Activated T-helper 2 cell treated with anti-CD3 and anti-CD28 coated beads, Interferon-gamma antibody, Interleukin-2, Interleukin-4, amounts not matched to agents 10 μg/mL and 5 μg/mL and 100 μg/mL, durations not matched to agents 14 hours and 24 hours and 36 hours (primary cell): ENCODE measurements at regions of chr12 and their contacts with region 1.

Region 1: DNA sequence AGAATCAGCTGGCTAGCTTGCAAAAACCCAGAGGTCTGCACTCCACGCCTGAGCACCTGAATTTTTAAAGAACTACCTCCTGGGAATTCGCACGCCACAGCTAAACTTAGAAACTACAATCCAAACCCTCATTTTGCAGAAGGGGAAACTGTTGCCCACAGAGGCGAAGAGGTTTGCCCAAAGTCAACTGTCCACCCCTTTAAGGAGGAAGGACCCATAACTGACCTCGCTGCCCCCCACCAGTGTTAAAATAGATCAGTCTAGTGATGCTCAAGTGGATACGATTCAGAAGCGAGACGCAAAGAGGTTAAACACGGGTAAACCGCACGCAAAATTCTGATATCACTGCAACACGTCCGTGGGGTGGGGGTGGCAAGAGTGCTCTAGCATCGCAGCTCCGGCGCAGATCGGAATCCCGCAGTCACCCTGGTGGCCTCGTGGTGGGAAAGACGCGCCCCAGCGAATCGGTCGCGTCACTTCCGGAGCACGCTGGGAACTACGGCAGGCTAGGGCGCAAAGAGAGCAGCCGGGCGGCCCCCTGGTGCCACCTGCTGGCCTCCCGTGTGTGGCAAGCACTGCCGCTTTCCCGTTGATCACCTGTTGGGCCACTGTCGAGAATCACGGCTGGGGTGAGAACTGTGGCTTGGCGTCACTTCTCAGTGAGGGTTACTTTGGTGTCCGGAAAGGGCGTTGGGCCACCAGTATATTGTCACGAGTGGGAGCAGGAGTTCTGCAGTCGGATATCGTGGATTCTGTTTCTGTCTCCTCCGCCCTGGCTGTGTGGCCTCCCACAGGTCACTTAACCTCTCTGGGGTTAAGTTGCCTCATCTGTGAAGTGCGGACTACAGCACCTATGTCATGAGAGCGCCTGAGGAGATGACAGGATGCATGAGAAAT is at the start of gene ALKBH2:
- DNase-seq: peak; percentile 90
- H3K4me3 Mint-ChIP-seq: peak within 1 kb of the TSS; percentile 77
- H3K27ac Mint-ChIP-seq: peak within 1 kb of the TSS; percentile 71
- H3K4me1 Mint-ChIP-seq: peaks cover 33% of the 10 kb centered on the region
- H3K27me3 Mint-ChIP-seq: no peaks in the 10 kb centered on the region
- total RNA-seq, gene ALKBH2: 33.4 and 34.9 TPM in 2 replicates

Region 2: DNA sequence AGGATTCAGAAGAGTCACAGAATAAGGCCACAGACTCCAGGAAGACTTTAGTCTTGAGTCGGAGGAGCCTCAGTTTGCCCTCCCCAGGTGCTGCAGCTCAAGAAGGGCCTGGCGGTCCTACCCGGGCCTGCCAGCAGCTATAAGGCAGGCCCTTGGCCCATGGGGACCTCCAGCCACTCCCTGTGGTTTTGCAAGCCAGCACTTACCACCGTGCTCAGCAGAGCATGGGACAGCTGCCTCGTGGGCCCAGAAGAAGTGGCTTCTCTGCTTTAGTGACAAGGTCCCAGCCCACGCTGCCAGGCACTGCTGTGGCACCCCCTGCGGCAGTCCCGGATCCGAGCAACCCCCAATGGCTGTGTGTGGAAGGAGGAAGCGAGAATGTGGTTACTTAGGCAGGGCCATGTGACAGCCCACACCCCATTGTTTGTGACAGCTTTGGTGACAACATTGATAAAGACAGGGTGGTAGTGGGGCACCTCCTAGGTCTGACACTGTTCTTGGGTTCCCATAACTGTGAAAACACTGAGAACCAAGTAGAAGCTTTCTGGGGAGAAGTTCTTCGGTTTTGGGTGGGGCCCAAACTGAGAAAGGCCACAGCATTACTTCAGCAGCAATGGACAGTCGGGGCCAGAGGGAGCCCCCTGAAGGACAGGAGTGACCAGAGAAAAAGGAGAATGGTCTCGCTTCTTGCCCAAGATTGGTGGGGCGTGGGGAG is 459.6 kb before region 1 on chr12 and contains the start of gene SELPLG:
- intact Hi-C with region 1: loop called (anchors 2 kb)
- DNase-seq: peak; percentile 83
- H3K4me3 Mint-ChIP-seq: peak within 1 kb of the TSS; percentile 98
- H3K27ac Mint-ChIP-seq: peak within 1 kb of the TSS; percentile 99
- H3K4me1 Mint-ChIP-seq: peaks cover 65% of the 10 kb centered on the region
- H3K27me3 Mint-ChIP-seq: no peaks in the 10 kb centered on the region
- total RNA-seq, gene SELPLG: 52.1 and 55.6 TPM in 2 replicates

Region 3: DNA sequence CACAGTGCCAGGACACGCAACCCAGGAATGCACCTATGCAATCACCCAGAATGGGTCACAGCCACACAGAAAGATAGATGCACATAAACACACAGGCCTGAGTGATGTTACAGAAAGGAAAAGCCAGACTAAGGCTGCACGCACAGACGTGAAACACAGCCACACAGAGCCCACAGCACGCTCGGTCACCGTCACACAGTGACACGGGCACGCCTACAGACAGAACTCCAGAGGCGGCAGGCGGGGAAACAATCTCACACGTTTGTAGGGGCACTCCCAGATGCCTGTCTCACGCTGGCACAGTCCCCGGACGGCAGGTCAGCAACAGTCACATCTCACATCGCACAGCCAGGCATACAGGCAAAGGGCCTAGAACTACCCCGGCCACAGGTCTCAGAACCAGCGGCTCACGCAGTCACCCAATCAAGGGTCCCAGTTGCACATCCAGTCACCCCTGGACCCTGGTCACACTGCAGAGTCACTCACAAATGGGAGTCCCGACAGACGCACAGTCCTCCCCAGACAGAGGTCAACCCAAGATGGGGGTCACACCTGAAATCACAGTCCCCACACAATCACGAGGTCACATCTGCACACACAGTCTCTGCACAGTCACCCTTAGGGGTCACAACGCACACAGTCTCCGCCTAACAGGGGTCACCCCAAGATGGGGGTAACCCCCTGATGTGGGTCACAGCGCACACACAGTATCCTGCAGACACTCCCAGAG is 236.7 kb before region 1 on chr12:
- intact Hi-C with region 1: loop called (anchors 10 kb)
- DNase-seq: peak; percentile 40
- H3K4me3 Mint-ChIP-seq: peak overlapping the region; percentile 83
- H3K27ac Mint-ChIP-seq: peak overlapping the region; percentile 84
- H3K4me1 Mint-ChIP-seq: peaks cover 56% of the 10 kb centered on the region
- H3K27me3 Mint-ChIP-seq: no peaks in the 10 kb centered on the region

Region 4: GRCh38 chr12:108950991-108951739 is 142.1 kb before region 1 on chr12:
- intact Hi-C with region 1: loop called (anchors 5 kb)
- DNase-seq: peak; percentile 52
- H3K4me3 Mint-ChIP-seq: no peak overlapping the region
- H3K27ac Mint-ChIP-seq: no peak overlapping the region
- H3K4me1 Mint-ChIP-seq: no peaks in the 10 kb centered on the region
- H3K27me3 Mint-ChIP-seq: peaks cover 14% of the 10 kb centered on the region

Region 5: GRCh38 chr12:109154451-109155438 is 61.5 kb after region 1 on chr12:
- intact Hi-C with region 1: loop called (anchors 2 kb)
- DNase-seq: peak; percentile 78
- H3K4me3 Mint-ChIP-seq: peak overlapping the region; percentile 82
- H3K27ac Mint-ChIP-seq: peak overlapping the region; percentile 71
- H3K4me1 Mint-ChIP-seq: peaks cover 14% of the 10 kb centered on the region
- H3K27me3 Mint-ChIP-seq: peaks cover 9% of the 10 kb centered on the region